ENCODE measurements at regions of chr4 and their contacts with region 1.

Region 1: DNA sequence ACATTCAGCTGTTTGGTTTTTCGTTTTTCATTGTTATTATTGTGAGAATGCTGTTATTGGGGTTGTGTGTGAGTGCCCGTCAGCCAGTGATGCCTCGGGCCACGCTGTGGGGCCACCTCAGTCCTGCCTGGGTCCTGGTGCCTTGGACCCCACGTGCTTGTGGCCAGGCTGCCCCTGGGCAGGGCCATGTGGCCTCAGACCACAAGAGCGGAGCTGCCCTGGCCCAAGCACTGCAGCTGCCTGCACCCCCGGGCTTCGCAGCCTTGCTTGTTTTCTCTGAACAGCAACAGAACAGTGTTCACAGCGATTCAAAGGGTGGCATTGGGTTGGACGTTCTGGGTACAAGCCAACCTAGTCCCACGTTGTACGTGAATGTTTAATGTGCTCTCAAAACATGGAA is 56.9 kb downstream of the CPLX1 start:
- DNase-seq: no peak
- ATAC-seq: no peak

Region 2: GRCh38 chr4:754221-755120 is 14.5 kb before region 1 on chr4:
- intact Hi-C with region 1: loop called (anchors 2 kb)
- DNase-seq: no peak
- ATAC-seq: no peak

Measured in sciatic nerve (tissue), 2 donors.